ENCODE measurements at regions of chr15 and their contacts with region 1.

Region 1: DNA sequence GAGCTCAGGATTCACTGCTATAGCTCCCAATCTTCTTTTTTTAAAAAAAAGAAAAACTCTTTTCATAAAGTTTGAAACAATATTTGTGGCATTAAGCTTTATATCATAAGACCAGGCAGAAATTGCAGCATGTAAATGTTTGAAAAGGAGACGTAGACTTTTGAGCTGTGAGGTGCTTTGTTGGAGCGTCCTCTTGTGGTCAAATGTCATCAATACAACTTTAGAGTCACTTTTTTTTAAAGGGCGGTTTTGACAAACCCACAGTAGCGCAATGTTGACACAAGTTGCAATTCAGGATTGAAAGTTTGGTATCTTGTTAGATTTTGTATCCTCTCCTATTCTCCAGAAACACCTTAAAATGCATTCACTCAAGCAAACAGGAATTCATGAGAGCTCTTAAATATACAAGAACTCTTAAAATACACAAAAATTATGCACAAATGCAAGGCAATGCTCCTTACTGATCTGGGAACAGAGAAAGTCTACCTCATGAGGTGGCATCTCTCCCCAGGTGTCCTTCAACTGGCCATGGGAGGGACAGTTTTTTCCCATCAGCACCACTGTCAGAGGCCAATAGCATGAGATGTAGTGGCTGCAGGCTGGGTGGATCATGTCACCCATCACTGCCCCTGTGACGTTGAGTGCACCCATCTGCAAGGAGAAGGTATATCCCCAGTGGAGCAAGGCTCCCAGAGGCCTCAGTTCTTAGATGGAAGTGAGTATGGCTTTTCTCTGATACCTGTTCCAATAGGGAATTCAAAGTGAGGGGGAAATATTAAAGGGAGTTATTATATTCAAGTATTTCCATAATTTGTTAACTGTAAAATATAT is 70.7 kb downstream of the ANXA2 start:
- DNase-seq: peak; percentile 76
- H3K4me3 Mint-ChIP-seq: no peak overlapping the region
- H3K27ac Mint-ChIP-seq: no peak overlapping the region
- H3K4me1 Mint-ChIP-seq: no peaks in the 10 kb centered on the region
- H3K27me3 Mint-ChIP-seq: no peaks in the 10 kb centered on the region
- CTCF ChIP-seq: peak; percentile 94

Region 2: DNA sequence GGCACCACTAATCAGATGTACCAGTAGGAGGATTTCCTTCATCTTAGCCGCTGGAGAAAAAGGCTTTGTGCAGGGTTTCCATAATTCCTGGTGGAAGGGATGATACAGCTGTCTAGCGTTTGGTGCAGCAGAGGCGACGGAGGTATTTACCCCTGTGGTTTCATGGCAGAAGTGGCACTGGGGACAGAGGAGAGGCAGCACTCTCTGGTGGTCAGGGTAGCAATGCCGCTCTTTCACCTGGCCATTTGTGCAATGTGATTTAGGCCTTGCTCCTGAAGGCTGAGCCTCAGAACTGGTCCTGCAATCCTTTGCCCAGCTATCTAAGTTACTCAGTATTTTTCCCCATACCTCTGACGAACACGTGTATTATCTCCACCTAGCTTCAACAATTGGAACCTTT is 590.9 kb before region 1 on chr15:
- CTCF ChIA-PET with region 1: interaction called, 49 read pairs
- POLR2A ChIA-PET with region 1: interaction called, 3 read pairs
- intact Hi-C with region 1: loop called (anchors 1 kb)
- DNase-seq: no peak
- H3K4me3 Mint-ChIP-seq: no peak overlapping the region
- H3K27ac Mint-ChIP-seq: no peak overlapping the region
- H3K4me1 Mint-ChIP-seq: no peaks in the 10 kb centered on the region
- H3K27me3 Mint-ChIP-seq: no peaks in the 10 kb centered on the region
- CTCF ChIP-seq: no peak

Region 3: DNA sequence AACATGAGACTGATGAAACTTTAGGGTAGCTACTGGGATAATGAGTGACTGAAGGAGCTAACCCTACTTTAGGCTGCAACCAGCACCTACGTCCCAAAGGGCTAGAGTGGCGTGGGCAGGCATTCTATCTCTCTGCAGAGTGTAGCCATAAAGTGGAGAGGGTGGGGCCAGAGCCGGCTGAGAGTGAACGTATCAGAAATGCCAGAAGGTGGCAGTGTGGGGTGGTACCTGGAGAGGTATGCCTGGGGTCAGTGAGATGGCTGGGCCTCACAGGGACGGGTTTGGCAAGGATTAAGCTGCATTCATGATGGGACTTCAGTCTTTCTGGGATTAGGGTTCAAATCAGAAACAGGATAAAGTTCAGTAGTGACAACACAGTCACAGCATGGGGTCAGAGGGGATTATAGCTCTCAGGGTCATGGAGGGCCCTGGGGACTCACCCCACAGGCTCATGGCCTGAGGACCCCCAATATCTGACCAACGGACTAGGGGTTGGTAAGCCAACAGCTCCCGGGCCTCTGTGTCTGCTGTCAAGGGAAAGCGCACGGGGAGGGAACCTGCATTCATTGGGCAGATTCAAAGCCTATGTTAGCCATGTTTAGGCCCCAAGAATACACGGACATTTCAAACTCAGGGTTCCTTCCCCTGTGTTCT is 409.4 kb before region 1 on chr15:
- CTCF ChIA-PET with region 1: interaction called, 147 read pairs
- POLR2A ChIA-PET with region 1: interaction called, 7 read pairs
- intact Hi-C with region 1: loop called (anchors 1 kb)
- DNase-seq: peak; percentile 81
- H3K4me3 Mint-ChIP-seq: no peak overlapping the region
- H3K27ac Mint-ChIP-seq: no peak overlapping the region
- H3K4me1 Mint-ChIP-seq: peaks cover 20% of the 10 kb centered on the region
- H3K27me3 Mint-ChIP-seq: peaks cover 11% of the 10 kb centered on the region
- CTCF ChIP-seq: peak; percentile 77

Region 4: DNA sequence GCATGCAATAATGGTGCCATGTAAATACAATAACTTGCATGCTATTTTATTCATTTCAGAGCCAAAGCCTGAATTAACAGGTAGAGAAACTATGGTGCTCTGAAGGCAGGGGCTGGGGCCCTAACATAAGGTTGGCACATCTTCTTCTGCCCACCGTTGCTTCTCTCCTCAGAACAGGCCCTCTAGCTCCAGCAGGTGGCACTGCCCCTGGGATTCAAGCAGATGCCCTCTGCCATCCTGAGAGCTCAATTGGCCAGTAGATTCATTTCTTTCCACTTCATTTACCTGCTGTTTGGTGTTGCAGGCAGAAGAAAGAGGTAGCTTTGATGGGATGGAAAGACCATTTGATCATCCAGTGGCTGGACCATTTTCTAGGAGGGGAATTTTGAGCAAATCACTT is 192.4 kb before region 1 on chr15:
- CTCF ChIA-PET with region 1: interaction called, 7 read pairs
- POLR2A ChIA-PET with region 1: interaction called, 4 read pairs
- intact Hi-C with region 1: loop called (anchors 2 kb)
- DNase-seq: peak; percentile 24
- H3K4me3 Mint-ChIP-seq: no peak overlapping the region
- H3K27ac Mint-ChIP-seq: no peak overlapping the region
- H3K4me1 Mint-ChIP-seq: peaks cover 4% of the 10 kb centered on the region
- H3K27me3 Mint-ChIP-seq: no peaks in the 10 kb centered on the region
- CTCF ChIP-seq: peak; percentile 41

Region 5: GRCh38 chr15:60299452-60300047 is 27.5 kb before region 1 on chr15:
- CTCF ChIA-PET with region 1: interaction called, 10 read pairs
- POLR2A ChIA-PET with region 1: no interaction called
- intact Hi-C with region 1: no loop called
- DNase-seq: peak; percentile 86
- H3K4me3 Mint-ChIP-seq: no peak overlapping the region
- H3K27ac Mint-ChIP-seq: no peak overlapping the region
- H3K4me1 Mint-ChIP-seq: peaks cover 4% of the 10 kb centered on the region
- H3K27me3 Mint-ChIP-seq: no peaks in the 10 kb centered on the region
- CTCF ChIP-seq: no peak

Region 6: DNA sequence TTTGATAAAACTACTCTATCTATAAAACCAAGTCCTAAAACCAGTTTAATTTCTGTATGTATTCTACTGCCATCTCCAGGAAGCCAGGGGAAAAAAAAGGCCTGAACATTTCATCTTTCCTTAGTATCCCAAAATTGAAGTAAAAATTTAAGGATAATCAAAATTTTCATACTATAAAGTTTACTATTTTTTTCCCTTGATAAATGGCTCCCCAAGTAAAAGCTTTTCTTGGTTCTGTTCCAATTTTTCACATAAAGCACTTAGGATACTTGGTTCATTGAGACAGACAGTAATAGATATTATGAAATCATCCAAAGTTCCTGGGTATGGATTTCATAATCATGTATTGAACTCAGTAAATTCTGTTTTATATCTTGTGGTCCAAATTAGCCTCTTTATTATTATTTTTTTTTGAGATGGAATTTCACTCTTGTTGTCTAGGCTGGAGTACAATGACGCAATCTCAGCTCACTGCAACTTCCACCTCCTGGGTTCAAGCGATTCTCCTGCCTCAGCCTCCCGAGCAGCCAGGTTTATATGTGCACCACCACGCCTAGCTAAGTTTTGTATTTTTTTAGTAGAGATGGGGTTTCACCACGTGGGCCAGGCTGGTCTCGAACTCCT is 117.4 kb after region 1 on chr15:
- CTCF ChIA-PET with region 1: interaction called, 30 read pairs
- POLR2A ChIA-PET with region 1: no interaction called
- intact Hi-C with region 1: loop called (anchors 1 kb)
- DNase-seq: peak; percentile 50
- H3K4me3 Mint-ChIP-seq: no peak overlapping the region
- H3K27ac Mint-ChIP-seq: peak overlapping the region; percentile 39
- H3K4me1 Mint-ChIP-seq: peaks cover 5% of the 10 kb centered on the region
- H3K27me3 Mint-ChIP-seq: no peaks in the 10 kb centered on the region
- CTCF ChIP-seq: peak; percentile 45